BJ (cell line): ENCODE measurements at regions of chr22 and their contacts with region 1.

Region 1: GRCh38 chr22:31148953-31149627 is 8.8 kb upstream of the PLA2G3 start:
- DNase-seq: no peak
- H3K4me3 ChIP-seq: no peak overlapping the region
- H3K27me3 ChIP-seq: no peaks in the 10 kb centered on the region; the same call in 1 of the 2 replicates
- CTCF ChIP-seq: peak; percentile 99

Region 2: GRCh38 chr22:30890686-30891442 is 258.2 kb before region 1 on chr22:
- CTCF ChIA-PET with region 1: no interaction called
- POLR2A ChIA-PET with region 1: no interaction called
- DNase-seq: no peak
- H3K4me3 ChIP-seq: no peak overlapping the region
- H3K27me3 ChIP-seq: no peaks in the 10 kb centered on the region
- CTCF ChIP-seq: peak; percentile 87

Region 3: DNA sequence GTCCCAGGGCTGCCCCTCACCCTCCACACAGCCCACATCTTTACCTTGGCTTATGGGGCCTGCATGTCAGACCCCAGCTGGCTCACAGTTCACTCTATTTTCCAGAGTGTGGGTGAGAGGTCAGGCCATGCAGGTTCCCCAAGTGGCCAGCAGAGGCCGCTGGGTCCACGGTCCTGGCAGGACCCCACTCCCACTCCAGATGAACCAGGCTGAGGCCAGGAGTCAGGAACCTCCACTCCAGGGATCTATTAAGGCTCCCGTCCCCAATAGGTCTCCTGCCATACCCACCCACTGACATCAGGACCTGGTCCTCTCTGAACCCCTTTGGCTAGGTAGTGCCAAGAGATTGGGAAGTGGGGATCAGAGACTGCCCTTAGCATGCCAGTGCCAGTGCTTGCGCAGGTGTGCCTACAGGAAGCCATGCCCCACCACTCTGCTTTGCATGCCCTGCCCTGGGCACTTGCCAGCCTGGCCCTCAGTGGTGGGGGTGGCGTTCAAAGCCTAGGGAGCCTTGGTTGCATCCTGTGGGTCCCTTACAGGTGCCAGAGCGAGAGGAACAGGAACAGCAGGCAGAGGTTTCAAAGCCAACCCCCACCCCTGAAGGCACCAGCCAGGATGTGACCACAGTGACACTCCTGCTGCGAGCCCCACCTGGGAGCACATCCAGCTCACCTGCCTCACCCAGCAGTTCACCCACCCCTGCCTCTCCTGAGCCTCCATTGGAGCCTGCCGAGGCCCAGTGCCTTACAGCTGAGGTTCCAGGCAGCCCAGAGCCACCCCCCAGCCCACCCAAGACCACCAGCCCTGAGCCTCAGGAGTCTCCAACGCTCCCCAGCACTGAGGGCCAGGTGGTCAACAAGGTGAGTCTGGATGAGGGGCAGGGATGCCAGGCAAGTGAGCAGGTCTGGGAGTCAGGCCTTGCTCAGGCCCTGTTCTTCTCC is 59.7 kb before region 1 on chr22:
- CTCF ChIA-PET with region 1: interaction called, 26 read pairs
- POLR2A ChIA-PET with region 1: no interaction called
- DNase-seq: no peak
- H3K4me3 ChIP-seq: no peak overlapping the region
- H3K27me3 ChIP-seq: no peaks in the 10 kb centered on the region
- CTCF ChIP-seq: peak; percentile 87

Region 4: GRCh38 chr22:31107178-31107893 is 41.8 kb before region 1 on chr22 and contains the start of gene SELENOM:
- CTCF ChIA-PET with region 1: interaction called, 59 read pairs
- POLR2A ChIA-PET with region 1: interaction called, 3 read pairs
- DNase-seq: peak; percentile 89
- H3K4me3 ChIP-seq: peak within 1 kb of the TSS; percentile 85
- H3K27me3 ChIP-seq: no peaks in the 10 kb centered on the region
- CTCF ChIP-seq: peak; percentile 99
- polyA plus RNA-seq, gene SELENOM: 215 and 292 TPM in 2 replicates

Region 5: DNA sequence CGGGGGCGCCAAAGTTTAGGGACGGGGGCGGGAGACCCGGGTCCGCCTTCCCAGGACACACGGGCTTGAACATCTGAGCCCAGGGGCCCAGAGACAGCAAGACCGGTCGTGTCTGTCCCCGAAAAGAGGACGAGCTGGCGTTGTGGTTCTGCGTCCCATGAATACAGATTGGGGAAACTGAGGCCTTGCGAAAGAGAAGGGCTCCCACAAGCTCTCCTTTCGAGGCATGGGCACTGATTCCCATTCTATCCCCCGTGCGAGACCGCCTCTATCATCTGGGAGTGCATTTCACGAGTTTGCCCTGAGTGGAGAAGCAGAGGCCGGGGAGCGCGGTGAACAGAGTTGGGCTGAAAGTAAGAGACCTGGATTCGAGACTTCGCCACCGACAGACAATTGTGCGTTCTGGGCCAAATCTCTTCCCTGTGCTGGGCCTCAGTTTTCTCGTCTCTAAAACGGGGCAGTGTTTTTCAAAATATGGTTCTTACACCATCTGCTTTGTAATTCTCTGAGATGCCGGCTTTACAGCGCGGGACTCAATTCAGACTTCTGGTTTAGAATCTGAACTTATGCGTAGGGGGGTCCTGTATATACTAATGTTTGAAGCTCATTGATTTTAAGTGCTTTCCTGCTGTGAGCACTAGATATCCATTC is 11.4 kb after region 1 on chr22:
- CTCF ChIA-PET with region 1: interaction called, 29 read pairs
- POLR2A ChIA-PET with region 1: no interaction called
- DNase-seq: no peak
- H3K4me3 ChIP-seq: peak overlapping the region; percentile 62
- H3K27me3 ChIP-seq: no peaks in the 10 kb centered on the region
- CTCF ChIP-seq: no peak

Region 6: GRCh38 chr22:31295831-31296657 is 147.0 kb after region 1 on chr22:
- CTCF ChIA-PET with region 1: no interaction called
- POLR2A ChIA-PET with region 1: no interaction called
- DNase-seq: no peak
- H3K4me3 ChIP-seq: no peak overlapping the region
- H3K27me3 ChIP-seq: peaks cover 2% of the 10 kb centered on the region; the same call in 1 of the 2 replicates
- CTCF ChIP-seq: no peak